ENCODE measurements at regions of chr19 and their contacts with region 1.

Region 1: GRCh38 chr19:57583521-57584416 is at the start of gene ZIK1:
- DNase-seq: peak; percentile 39 to 94
- H3K4me3 ChIP-seq: peak within 1 kb of the TSS; percentile 61 to 68
- H3K27ac ChIP-seq: peak within 1 kb of the TSS in 1 of 2 donors; percentile 15
- H3K4me1 ChIP-seq: peaks cover 0 to 8% of the 10 kb centered on the region in 2 donors
- H3K27me3 ChIP-seq: no peaks in the 10 kb centered on the region
- CTCF ChIP-seq: no peak
- total RNA-seq, gene ZIK1: 0.53 TPM

Region 2: GRCh38 chr19:57546513-57546912 is 37.3 kb before region 1 on chr19:
- intact Hi-C with region 1: no loop called
- DNase-seq: no peak
- H3K4me3 ChIP-seq: no peak overlapping the region
- H3K27ac ChIP-seq: no peak overlapping the region
- H3K4me1 ChIP-seq: no peaks in the 10 kb centered on the region
- H3K27me3 ChIP-seq: no peaks in the 10 kb centered on the region
- CTCF ChIP-seq: no peak

Region 3: GRCh38 chr19:57682226-57682766 is 98.5 kb after region 1 on chr19:
- intact Hi-C with region 1: loop called (anchors 5 kb)
- DNase-seq: no peak
- H3K4me3 ChIP-seq: peak overlapping the region; percentile 90 to 93
- H3K27ac ChIP-seq: no peak overlapping the region
- H3K4me1 ChIP-seq: peaks cover 6 to 14% of the 10 kb centered on the region in 2 donors
- H3K27me3 ChIP-seq: no peaks in the 10 kb centered on the region
- CTCF ChIP-seq: no peak